Heart right ventricle (tissue), 16 donors: ENCODE measurements at regions of chr3 and their contacts with region 1.

Region 1: GRCh38 chr3:48918388-48919214 is at the start of gene ARIH2:
- DNase-seq: peak; percentile 93 to 95
- ATAC-seq: peak; percentile 96 to 98 (median 98)
- H3K4me3 ChIP-seq: peak within 1 kb of the TSS; percentile 60 to 98 (median 90)
- H3K27ac ChIP-seq: peak within 1 kb of the TSS; percentile 94 to 100 (median 97)
- H3K4me1 ChIP-seq: peaks cover 4 to 48% (median 30%) of the 10 kb centered on the region in 9 donors
- H3K27me3 ChIP-seq: no peaks in the 10 kb centered on the region
- CTCF ChIP-seq: peak in 4 of 9 donors; percentile 8 to 39 (median 18)
- total RNA-seq, gene ARIH2: 84.0 to 177 (median 147) TPM

Region 2: GRCh38 chr3:48820612-48821324 is 97.8 kb before region 1 on chr3:
- intact Hi-C with region 1: no loop called
- DNase-seq: peak in 1 of 2 donors; percentile 34
- ATAC-seq: peak; percentile 48 to 77 (median 67)
- H3K4me3 ChIP-seq: no peak overlapping the region
- H3K27ac ChIP-seq: peak overlapping the region in 7 of 10 donors; percentile 18 to 63 (median 30)
- H3K4me1 ChIP-seq: peaks cover 10 to 25% (median 18%) of the 10 kb centered on the region in 9 donors
- H3K27me3 ChIP-seq: no peaks in the 10 kb centered on the region
- CTCF ChIP-seq: no peak

Region 3: GRCh38 chr3:48847504-48848423 is 70.8 kb before region 1 on chr3 and contains the start of gene PRKAR2A:
- intact Hi-C with region 1: loop called in 1 of 10 experiments (anchors 2 kb)
- DNase-seq: peak; percentile 89 to 92
- ATAC-seq: peak; percentile 95 to 98 (median 96)
- H3K4me3 ChIP-seq: peak within 1 kb of the TSS; percentile 65 to 97 (median 87)
- H3K27ac ChIP-seq: peak within 1 kb of the TSS; percentile 90 to 99 (median 97)
- H3K4me1 ChIP-seq: peaks cover 6 to 34% (median 24%) of the 10 kb centered on the region in 9 donors
- H3K27me3 ChIP-seq: no peaks in the 10 kb centered on the region
- CTCF ChIP-seq: no peak
- total RNA-seq, gene PRKAR2A: 42.8 to 55.7 (median 44.8) TPM

Region 4: GRCh38 chr3:48898383-48899234 is 20.0 kb before region 1 on chr3 and contains the start of gene SLC25A20:
- intact Hi-C with region 1: loop called in 3 of 10 experiments (anchors 1 to 2 kb)
- DNase-seq: peak; percentile 91 to 95
- ATAC-seq: peak; percentile 97 to 99 (median 98)
- H3K4me3 ChIP-seq: peak within 1 kb of the TSS; percentile 43 to 96 (median 82)
- H3K27ac ChIP-seq: peak within 1 kb of the TSS; percentile 19 to 95 (median 90)
- H3K4me1 ChIP-seq: peaks cover 5 to 24% (median 19%) of the 10 kb centered on the region in 9 donors
- H3K27me3 ChIP-seq: no peaks in the 10 kb centered on the region
- CTCF ChIP-seq: peak in 3 of 9 donors; percentile 16 to 27 (median 22)
- total RNA-seq, gene SLC25A20: 42.5 to 129 (median 82.6) TPM